ENCODE measurements at regions of chr1 and their contacts with region 1.

Region 1: GRCh38 chr1:156067262-156067661 is 6.3 kb downstream of the RAB25 start:
- DNase-seq: no peak
- ATAC-seq: no peak
- H3K4me3 ChIP-seq: no peak overlapping the region
- H3K27ac ChIP-seq: no peak overlapping the region
- H3K4me1 ChIP-seq: peaks cover 47% of the 10 kb centered on the region
- H3K27me3 ChIP-seq: no peaks in the 10 kb centered on the region
- CTCF ChIP-seq: no peak
- EP300 ChIP-seq: no peak
- POLR2A ChIP-seq: no peak
- RAD21 ChIP-seq: no peak

Region 2: GRCh38 chr1:155859234-155859829 is 207.9 kb before region 1 on chr1 and contains the start of gene SYT11:
- CTCF ChIA-PET with region 1: no interaction called
- POLR2A ChIA-PET with region 1: no interaction called
- in situ Hi-C with region 1: no loop called
- intact Hi-C with region 1: no loop called
- DNase-seq: peak; percentile 94
- ATAC-seq: peak; percentile 83
- H3K4me3 ChIP-seq: peak within 1 kb of the TSS; percentile 78 to 90 (median 82)
- H3K27ac ChIP-seq: peak within 1 kb of the TSS; percentile 57
- H3K4me1 ChIP-seq: peaks cover 23% of the 10 kb centered on the region
- H3K27me3 ChIP-seq: no peaks in the 10 kb centered on the region
- CTCF ChIP-seq: 0 out of 2 replicates have a peak, but pooled peaks have one; percentile 26
- EP300 ChIP-seq: no peak
- POLR2A ChIP-seq: no peak
- RAD21 ChIP-seq: no peak
- total RNA-seq, gene SYT11: 0.08 and 0.22 TPM in 2 replicates

Region 3: DNA sequence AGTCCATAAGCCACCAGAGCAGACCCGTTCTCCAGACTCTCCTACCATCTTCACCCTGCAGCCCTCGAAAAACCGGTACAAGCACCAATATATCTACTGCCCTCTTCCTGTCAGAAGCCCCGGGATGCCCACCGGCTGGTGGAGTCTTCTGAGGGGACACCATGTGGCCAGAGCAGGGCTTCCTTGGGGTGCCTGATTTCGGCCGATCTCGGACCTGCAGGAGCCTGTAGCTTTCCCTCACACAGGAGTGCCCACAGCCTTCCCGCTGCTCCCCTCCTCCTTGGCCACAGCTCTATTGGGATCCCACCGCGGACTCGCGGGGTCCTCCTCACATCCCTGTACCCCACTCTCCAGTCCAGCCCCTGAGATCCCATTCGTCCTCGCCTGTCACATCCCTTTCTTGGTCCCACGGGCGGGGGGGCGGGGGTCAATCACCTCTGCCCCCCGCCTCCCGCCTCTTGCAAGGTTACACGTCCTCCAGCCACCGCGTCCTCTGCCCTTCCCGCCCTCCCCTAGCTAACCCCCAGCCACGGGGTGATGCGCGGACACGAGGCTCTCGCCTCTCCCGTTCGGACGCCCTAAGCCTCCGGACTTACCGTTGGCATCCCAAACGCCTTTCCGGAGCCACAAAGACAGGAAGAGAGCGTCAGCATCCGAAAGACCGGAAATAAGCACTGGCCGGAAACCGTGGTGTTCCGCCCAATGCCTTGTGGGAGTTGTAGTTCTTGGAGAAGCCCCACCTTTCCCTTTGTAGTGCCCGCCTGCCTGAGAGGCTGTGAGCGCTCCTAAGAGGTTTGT is 46.8 kb before region 1 on chr1 and contains the start of gene SSR2:
- CTCF ChIA-PET with region 1: interaction called, 11 read pairs
- POLR2A ChIA-PET with region 1: interaction called, 3 read pairs
- in situ Hi-C with region 1: no loop called
- intact Hi-C with region 1: loop called (anchors 2 kb)
- DNase-seq: peak; percentile 92
- ATAC-seq: peak; percentile 97
- H3K4me3 ChIP-seq: peak within 1 kb of the TSS; percentile 92
- H3K27ac ChIP-seq: peak within 1 kb of the TSS; percentile 54
- H3K4me1 ChIP-seq: peaks cover 33% of the 10 kb centered on the region
- H3K27me3 ChIP-seq: no peaks in the 10 kb centered on the region; a peak in 1 of 5 replicates
- CTCF ChIP-seq: no peak
- EP300 ChIP-seq: 0 out of 4 replicates have a peak, but pooled peaks of 1 of the 2 experiments have one; percentile 24
- POLR2A ChIP-seq: peak; percentile 83 to 90
- RAD21 ChIP-seq: no peak
- total RNA-seq, gene SSR2: 150 and 284 TPM in 2 replicates

Region 4: GRCh38 chr1:156025877-156026276 is 41.4 kb before region 1 on chr1:
- CTCF ChIA-PET with region 1: interaction called, 11 read pairs
- POLR2A ChIA-PET with region 1: interaction called, 3 read pairs
- in situ Hi-C with region 1: no loop called
- intact Hi-C with region 1: loop called (anchors 2 kb)
- DNase-seq: peak; percentile 62
- ATAC-seq: peak; percentile 98
- H3K4me3 ChIP-seq: no peak overlapping the region
- H3K27ac ChIP-seq: no peak overlapping the region
- H3K4me1 ChIP-seq: peaks cover 28% of the 10 kb centered on the region
- H3K27me3 ChIP-seq: no peaks in the 10 kb centered on the region
- CTCF ChIP-seq: peak; percentile 84
- EP300 ChIP-seq: no peak
- POLR2A ChIP-seq: no peak
- RAD21 ChIP-seq: peak; percentile 67; the same call in 1 of the 2 replicates

Region 5: GRCh38 chr1:156090822-156091188 is 23.5 kb after region 1 on chr1:
- CTCF ChIA-PET with region 1: no interaction called
- POLR2A ChIA-PET with region 1: no interaction called
- in situ Hi-C with region 1: no loop called
- intact Hi-C with region 1: no loop called
- DNase-seq: peak; percentile 74
- ATAC-seq: peak; percentile 79
- H3K4me3 ChIP-seq: no peak overlapping the region
- H3K27ac ChIP-seq: no peak overlapping the region
- H3K4me1 ChIP-seq: peaks cover 47% of the 10 kb centered on the region
- H3K27me3 ChIP-seq: no peaks in the 10 kb centered on the region
- CTCF ChIP-seq: peak; percentile 92
- EP300 ChIP-seq: no peak
- POLR2A ChIP-seq: no peak
- RAD21 ChIP-seq: peak; percentile 93

Region 6: DNA sequence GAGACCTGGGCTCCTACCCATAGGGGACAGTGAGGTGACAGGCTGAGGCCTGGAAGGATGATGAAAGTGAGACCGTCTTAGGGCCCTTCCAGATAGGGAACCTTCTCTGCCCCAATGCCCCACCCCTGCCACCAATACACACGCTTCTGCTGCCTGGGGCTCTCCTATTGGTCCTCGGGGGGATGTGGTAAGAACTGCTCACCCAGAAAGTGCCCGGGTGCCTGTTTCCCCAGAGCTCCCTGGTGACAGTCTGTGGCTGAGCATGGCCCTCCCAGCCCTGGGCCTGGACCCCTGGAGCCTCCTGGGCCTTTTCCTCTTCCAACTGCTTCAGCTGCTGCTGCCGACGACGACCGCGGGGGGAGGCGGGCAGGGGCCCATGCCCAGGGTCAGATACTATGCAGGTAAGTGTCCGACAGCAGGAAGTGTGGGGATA is 87.1 kb after region 1 on chr1:
- CTCF ChIA-PET with region 1: no interaction called
- POLR2A ChIA-PET with region 1: no interaction called
- in situ Hi-C with region 1: no loop called
- intact Hi-C with region 1: no loop called
- DNase-seq: no peak
- ATAC-seq: peak; percentile 9; the same call in 1 of the 3 replicates
- H3K4me3 ChIP-seq: peak overlapping the region in 1 of 3 experiments; percentile 8; a peak in 1 of 6 replicates
- H3K27ac ChIP-seq: no peak overlapping the region
- H3K4me1 ChIP-seq: peaks cover 48% of the 10 kb centered on the region
- H3K27me3 ChIP-seq: peaks cover 0 to 29% of the 10 kb centered on the region in 2 experiments; a peak in 3 of 5 replicates
- CTCF ChIP-seq: no peak
- EP300 ChIP-seq: no peak
- POLR2A ChIP-seq: no peak
- RAD21 ChIP-seq: no peak

Measured in HepG2 (cell line).